ENCODE measurements at regions of chr4 and their contacts with region 1.

Region 1: GRCh38 chr4:83252782-83253405 is 31.7 kb downstream of the COQ2 start:
- DNase-seq: peak; percentile 80
- ATAC-seq: peak; percentile 91
- H3K4me3 Mint-ChIP-seq: no peak overlapping the region
- H3K27ac Mint-ChIP-seq: no peak overlapping the region
- H3K4me1 Mint-ChIP-seq: peaks cover 24% of the 10 kb centered on the region
- H3K27me3 Mint-ChIP-seq: no peaks in the 10 kb centered on the region

Region 2: GRCh38 chr4:83074086-83074704 is 178.7 kb before region 1 on chr4:
- CTCF ChIA-PET with region 1: interaction called, 16 read pairs
- POLR2A ChIA-PET with region 1: interaction called, 6 read pairs
- intact Hi-C with region 1: loop called in 1 of 2 experiments (anchors 2 kb)
- DNase-seq: peak; percentile 63
- ATAC-seq: peak; percentile 91
- H3K4me3 Mint-ChIP-seq: peak overlapping the region; percentile 25
- H3K27ac Mint-ChIP-seq: no peak overlapping the region
- H3K4me1 Mint-ChIP-seq: peaks cover 13% of the 10 kb centered on the region
- H3K27me3 Mint-ChIP-seq: no peaks in the 10 kb centered on the region

Region 3: GRCh38 chr4:83267121-83267829 is 14.4 kb after region 1 on chr4:
- CTCF ChIA-PET with region 1: interaction called, 25 read pairs
- POLR2A ChIA-PET with region 1: no interaction called
- intact Hi-C with region 1: no loop called
- DNase-seq: no peak
- ATAC-seq: no peak
- H3K4me3 Mint-ChIP-seq: no peak overlapping the region
- H3K27ac Mint-ChIP-seq: no peak overlapping the region
- H3K4me1 Mint-ChIP-seq: peaks cover 10% of the 10 kb centered on the region
- H3K27me3 Mint-ChIP-seq: no peaks in the 10 kb centered on the region